H1 (cell line): ENCODE measurements at regions of chr17 and their contacts with region 1.

Region 1: GRCh38 chr17:48024937-48025906 is 12.4 kb downstream of the COPZ2 start:
- DNase-seq: peak; percentile 91 to 99
- H3K4me3 ChIP-seq: peak overlapping the region; percentile 30 to 65 (median 50); a peak in 7 of 8 replicates
- H3K27ac ChIP-seq: no peak overlapping the region
- H3K4me1 ChIP-seq: peaks cover 0 to 21% (median 11%) of the 10 kb centered on the region in 4 experiments; a peak in 5 of 7 replicates
- H3K27me3 ChIP-seq: peaks cover 2 to 23% (median 17%) of the 10 kb centered on the region in 4 experiments
- CTCF ChIP-seq: peak; percentile 81 to 87 (median 83)
- EP300 ChIP-seq: no peak
- POLR2A ChIP-seq: no peak
- RAD21 ChIP-seq: peak; percentile 96

Region 2: GRCh38 chr17:47840740-47841603 is 184.2 kb before region 1 on chr17 and contains the start of gene SCRN2:
- CTCF ChIA-PET with region 1: interaction called, 11 read pairs
- POLR2A ChIA-PET with region 1: no interaction called
- DNase-seq: peak; percentile 85 to 99
- H3K4me3 ChIP-seq: peak within 1 kb of the TSS; percentile 47 to 92 (median 80)
- H3K27ac ChIP-seq: no peak within 1 kb of the TSS
- H3K4me1 ChIP-seq: peaks cover 0 to 23% (median 8%) of the 10 kb centered on the region in 4 experiments; a peak in 5 of 7 replicates
- H3K27me3 ChIP-seq: peaks cover 2 to 18% (median 12%) of the 10 kb centered on the region in 4 experiments
- CTCF ChIP-seq: peak; percentile 90 to 96 (median 90)
- EP300 ChIP-seq: no peak
- POLR2A ChIP-seq: no peak
- RAD21 ChIP-seq: peak; percentile 95 to 97
- total RNA-seq, gene SCRN2: 24.4 and 27.4 TPM in 2 replicates

Region 3: GRCh38 chr17:48037036-48037837 is 12.0 kb after region 1 on chr17 and contains the start of gene COPZ2:
- CTCF ChIA-PET with region 1: interaction called, 111 read pairs
- POLR2A ChIA-PET with region 1: interaction called, 1,227 read pairs
- DNase-seq: peak in 1 of 2 experiments; percentile 73
- H3K4me3 ChIP-seq: peak within 1 kb of the TSS; percentile 36 to 65 (median 45)
- H3K27ac ChIP-seq: no peak within 1 kb of the TSS
- H3K4me1 ChIP-seq: peaks cover 2 to 7% (median 4%) of the 10 kb centered on the region in 4 experiments; a peak in 5 of 7 replicates
- H3K27me3 ChIP-seq: peaks cover 6 to 27% (median 20%) of the 10 kb centered on the region in 4 experiments
- CTCF ChIP-seq: peak; percentile 61 to 73 (median 68)
- EP300 ChIP-seq: no peak
- POLR2A ChIP-seq: no peak
- RAD21 ChIP-seq: peak; percentile 41 to 51
- total RNA-seq, gene COPZ2: not detected in 2 replicates

Region 4: DNA sequence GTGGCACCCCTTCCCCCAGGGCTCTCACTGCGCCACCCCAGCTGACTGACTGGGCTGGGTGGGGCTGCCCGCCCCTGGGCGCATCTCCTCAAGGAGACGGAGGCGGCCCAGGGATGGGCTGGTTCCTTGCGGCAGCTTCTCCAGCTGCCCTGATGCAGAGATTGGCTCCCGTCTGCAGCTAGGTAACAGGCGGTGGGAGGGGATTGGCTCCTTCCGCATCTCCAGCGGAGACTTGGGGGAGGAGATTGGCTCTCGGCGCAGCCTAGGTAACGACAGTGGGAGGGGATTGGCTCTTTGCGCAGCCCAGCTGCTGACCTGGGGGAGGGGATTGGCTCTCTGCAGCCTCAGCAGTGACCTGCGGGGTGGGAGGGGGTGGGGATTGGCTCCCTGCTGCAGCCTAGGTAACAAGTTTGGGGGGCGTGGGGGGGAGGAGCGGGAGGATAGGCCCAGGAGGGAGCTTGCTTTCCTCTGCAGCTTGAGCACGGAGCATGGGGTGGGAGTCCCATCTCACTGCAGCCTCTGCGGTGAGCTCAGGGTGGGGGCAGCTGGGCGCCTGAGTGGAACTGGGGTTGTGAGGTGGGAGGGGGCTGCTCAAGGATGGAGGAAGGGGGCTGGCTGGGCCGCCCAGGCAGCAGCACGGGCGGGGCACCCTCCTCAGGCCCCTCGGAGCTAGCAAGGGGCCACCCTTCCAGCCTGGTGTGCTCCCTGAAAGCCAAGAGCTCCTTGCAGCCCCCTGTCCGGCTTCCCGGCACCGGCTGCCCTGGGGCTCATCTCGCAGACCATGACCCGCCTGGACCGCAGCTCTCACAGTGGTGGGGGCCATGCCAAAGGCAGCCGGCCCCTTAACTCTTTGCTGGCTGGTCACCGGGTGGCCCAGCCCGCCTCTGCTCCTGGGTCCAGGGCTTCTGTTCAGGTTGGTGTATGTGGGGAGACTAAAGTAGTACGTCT is 29.3 kb after region 1 on chr17:
- CTCF ChIA-PET with region 1: interaction called, 111 read pairs
- POLR2A ChIA-PET with region 1: interaction called, 1,227 read pairs
- DNase-seq: peak; percentile 89 to 98
- H3K4me3 ChIP-seq: peak overlapping the region; percentile 79 to 98 (median 84)
- H3K27ac ChIP-seq: peak overlapping the region; percentile 88
- H3K4me1 ChIP-seq: peaks cover 16 to 61% (median 40%) of the 10 kb centered on the region in 4 experiments
- H3K27me3 ChIP-seq: no peaks in the 10 kb centered on the region
- CTCF ChIP-seq: no peak
- EP300 ChIP-seq: no peak
- POLR2A ChIP-seq: peak in 1 of 2 experiments; percentile 13; a peak in 1 of 3 replicates
- RAD21 ChIP-seq: no peak

Region 5: GRCh38 chr17:48068491-48068961 is 43.3 kb after region 1 on chr17:
- CTCF ChIA-PET with region 1: interaction called, 181 read pairs
- POLR2A ChIA-PET with region 1: interaction called, 1,227 read pairs
- DNase-seq: peak in 1 of 2 experiments; percentile 62
- H3K4me3 ChIP-seq: no peak overlapping the region
- H3K27ac ChIP-seq: no peak overlapping the region
- H3K4me1 ChIP-seq: peaks cover 0 to 2% (median 0%) of the 10 kb centered on the region in 4 experiments; a peak in 1 of 7 replicates
- H3K27me3 ChIP-seq: no peaks in the 10 kb centered on the region
- CTCF ChIP-seq: peak; percentile 60 to 74 (median 69)
- EP300 ChIP-seq: no peak
- POLR2A ChIP-seq: no peak
- RAD21 ChIP-seq: peak; percentile 39 to 51

Region 6: DNA sequence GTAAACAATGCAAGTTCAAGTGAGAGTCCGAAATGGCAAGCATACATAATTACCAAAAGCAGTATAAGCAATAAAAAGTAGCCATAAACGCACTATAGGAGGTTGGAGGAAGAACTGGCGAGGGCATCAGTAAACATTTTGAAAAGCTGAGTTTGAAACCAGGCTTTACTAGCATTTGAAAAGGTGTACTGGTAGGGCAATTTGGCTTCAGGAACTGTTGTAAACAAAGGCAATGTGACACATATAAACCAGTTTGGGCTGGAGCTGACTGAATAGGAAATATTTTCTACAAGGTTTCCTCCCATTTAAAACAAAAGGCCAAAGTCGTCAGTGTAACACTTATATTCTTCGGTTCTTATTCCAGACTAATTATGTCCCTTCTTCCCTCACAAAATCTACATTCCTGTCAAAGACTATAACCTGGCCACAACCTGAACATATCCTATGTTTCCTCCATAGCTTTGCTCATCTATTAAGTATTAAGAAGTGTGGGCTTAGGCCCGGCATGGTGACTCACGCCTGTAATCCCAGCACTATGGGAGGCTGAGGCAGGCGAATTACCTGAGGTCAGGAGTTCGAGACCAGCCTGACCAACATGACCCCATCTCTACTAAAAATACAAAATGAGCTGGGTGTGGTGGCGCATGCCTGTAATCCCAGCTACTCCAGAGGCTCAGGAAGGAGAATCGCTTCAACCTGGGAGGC is 68.3 kb after region 1 on chr17:
- CTCF ChIA-PET with region 1: interaction called, 13 read pairs
- POLR2A ChIA-PET with region 1: no interaction called
- DNase-seq: no peak
- H3K4me3 ChIP-seq: no peak overlapping the region
- H3K27ac ChIP-seq: no peak overlapping the region
- H3K4me1 ChIP-seq: no peaks in the 10 kb centered on the region
- H3K27me3 ChIP-seq: no peaks in the 10 kb centered on the region
- CTCF ChIP-seq: no peak
- EP300 ChIP-seq: no peak
- POLR2A ChIP-seq: no peak
- RAD21 ChIP-seq: no peak

Region 7: GRCh38 chr17:48153691-48154358 is 128.6 kb after region 1 on chr17:
- CTCF ChIA-PET with region 1: interaction called, 11 read pairs
- POLR2A ChIA-PET with region 1: no interaction called
- DNase-seq: no peak
- H3K4me3 ChIP-seq: no peak overlapping the region
- H3K27ac ChIP-seq: no peak overlapping the region
- H3K4me1 ChIP-seq: peaks cover 0 to 12% (median 8%) of the 10 kb centered on the region in 4 experiments; a peak in 2 of 7 replicates
- H3K27me3 ChIP-seq: peaks cover 0 to 7% (median 1%) of the 10 kb centered on the region in 4 experiments; a peak in 3 of 7 replicates
- CTCF ChIP-seq: peak; percentile 47 to 67 (median 53)
- EP300 ChIP-seq: no peak
- POLR2A ChIP-seq: no peak
- RAD21 ChIP-seq: peak; percentile 81 to 83